CD8-positive, alpha-beta T cell (primary cell): ENCODE measurements at regions of chr22 and their contacts with region 1.

Region 1: DNA sequence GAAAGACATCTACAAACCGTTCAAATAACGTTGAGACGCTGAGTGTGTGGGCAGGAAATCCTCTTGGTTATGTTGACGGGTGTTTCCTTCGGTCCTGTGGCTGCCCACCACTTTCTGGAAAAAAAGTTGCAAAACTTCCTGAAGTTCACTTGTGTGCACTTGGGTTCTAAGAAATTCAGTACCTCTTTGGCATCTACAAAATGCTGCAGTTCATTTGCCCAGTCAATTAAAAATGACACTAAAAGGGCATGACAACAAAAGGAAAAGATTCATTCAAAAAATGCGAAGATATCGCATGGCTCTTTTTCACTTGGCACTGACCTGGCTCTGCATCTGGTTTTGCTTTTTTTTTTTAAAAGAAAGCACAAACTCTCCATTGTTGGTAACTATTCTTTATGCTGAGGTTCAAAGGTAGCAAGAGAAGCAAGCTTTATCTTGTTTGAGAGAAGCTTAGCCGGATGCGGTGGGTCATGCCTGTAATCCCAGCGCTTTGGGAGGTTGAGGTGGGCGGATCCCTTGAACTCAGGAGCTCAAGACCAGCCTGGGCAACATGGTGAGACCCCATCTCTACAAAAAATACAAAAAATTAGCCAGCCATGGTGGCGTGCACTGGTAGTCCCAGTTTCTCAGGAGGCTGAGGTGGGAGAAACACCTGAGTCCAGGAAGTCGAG is 10.6 kb upstream of the XBP1 start:
- DNase-seq: peak in 6 of 9 experiments; percentile 31 to 80 (median 52)
- ATAC-seq: peak; percentile 51
- H3K4me3 ChIP-seq: peak overlapping the region; percentile 25 to 46
- H3K4me3 Mint-ChIP-seq: peak overlapping the region; percentile 82
- H3K27ac ChIP-seq: peak overlapping the region; percentile 14 to 64
- H3K27ac Mint-ChIP-seq: peak overlapping the region; percentile 92
- H3K4me1 ChIP-seq: peaks cover 72% of the 10 kb centered on the region
- H3K4me1 Mint-ChIP-seq: peaks cover 76% of the 10 kb centered on the region
- H3K27me3 ChIP-seq: no peaks in the 10 kb centered on the region
- H3K27me3 Mint-ChIP-seq: no peaks in the 10 kb centered on the region
- CTCF ChIP-seq: no peak

Region 2: GRCh38 chr22:28772633-28773460 is 38.1 kb before region 1 on chr22 and contains the start of gene CCDC117:
- CTCF ChIA-PET with region 1: interaction called, 3 read pairs
- POLR2A ChIA-PET with region 1: interaction called, 3 read pairs
- intact Hi-C with region 1: loop called in 1 of 2 experiments (anchors 5 kb)
- DNase-seq: peak; percentile 85 to 96 (median 94)
- ATAC-seq: peak; percentile 94
- H3K4me3 ChIP-seq: peak within 1 kb of the TSS; percentile 60 to 65
- H3K4me3 Mint-ChIP-seq: peak within 1 kb of the TSS; percentile 94
- H3K27ac ChIP-seq: peak within 1 kb of the TSS; percentile 68 to 77
- H3K27ac Mint-ChIP-seq: peak within 1 kb of the TSS; percentile 94
- H3K4me1 ChIP-seq: peaks cover 26% of the 10 kb centered on the region
- H3K4me1 Mint-ChIP-seq: peaks cover 30% of the 10 kb centered on the region
- H3K27me3 ChIP-seq: no peaks in the 10 kb centered on the region
- H3K27me3 Mint-ChIP-seq: no peaks in the 10 kb centered on the region
- CTCF ChIP-seq: peak; percentile 31
- total RNA-seq, gene CCDC117: 13.7 to 15.4 TPM

Region 3: GRCh38 chr22:28791841-28792490 is 19.0 kb before region 1 on chr22:
- CTCF ChIA-PET with region 1: interaction called, 7 read pairs
- POLR2A ChIA-PET with region 1: interaction called, 106 read pairs
- intact Hi-C with region 1: loop called in 1 of 2 experiments (anchors 2 kb)
- DNase-seq: no peak
- ATAC-seq: no peak
- H3K4me3 ChIP-seq: no peak overlapping the region
- H3K4me3 Mint-ChIP-seq: no peak overlapping the region
- H3K27ac ChIP-seq: peak overlapping the region in 1 of 2 experiments; percentile 55
- H3K27ac Mint-ChIP-seq: peak overlapping the region; percentile 33
- H3K4me1 ChIP-seq: peaks cover 43% of the 10 kb centered on the region
- H3K4me1 Mint-ChIP-seq: peaks cover 56% of the 10 kb centered on the region
- H3K27me3 ChIP-seq: no peaks in the 10 kb centered on the region
- H3K27me3 Mint-ChIP-seq: no peaks in the 10 kb centered on the region
- CTCF ChIP-seq: no peak

Region 4: DNA sequence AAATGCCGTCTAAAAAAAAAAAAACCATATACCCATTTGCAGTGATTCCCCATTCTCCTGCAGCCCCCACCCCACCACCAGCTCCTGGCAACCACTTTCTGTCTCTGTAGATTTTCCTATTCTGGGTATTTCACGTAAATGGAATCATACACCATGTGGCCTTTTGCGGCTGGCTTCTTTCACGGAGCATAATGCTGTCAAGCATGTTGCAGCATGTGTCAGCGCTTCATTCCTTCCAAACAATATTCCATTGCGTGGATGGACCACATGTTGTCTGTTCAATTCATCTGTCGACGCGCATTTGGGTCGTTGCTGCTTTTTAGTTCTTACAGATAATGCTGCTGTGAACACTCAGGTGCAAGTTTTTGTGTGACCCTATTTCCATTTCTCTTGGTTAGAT is 380.0 kb after region 1 on chr22:
- CTCF ChIA-PET with region 1: no interaction called
- POLR2A ChIA-PET with region 1: no interaction called
- intact Hi-C with region 1: no loop called
- DNase-seq: no peak
- ATAC-seq: no peak
- H3K4me3 ChIP-seq: no peak overlapping the region
- H3K4me3 Mint-ChIP-seq: no peak overlapping the region
- H3K27ac ChIP-seq: no peak overlapping the region
- H3K27ac Mint-ChIP-seq: no peak overlapping the region
- H3K4me1 ChIP-seq: no peaks in the 10 kb centered on the region
- H3K4me1 Mint-ChIP-seq: no peaks in the 10 kb centered on the region
- H3K27me3 ChIP-seq: no peaks in the 10 kb centered on the region
- H3K27me3 Mint-ChIP-seq: peaks cover 3% of the 10 kb centered on the region
- CTCF ChIP-seq: no peak